Activated T-helper 1 cell treated with anti-CD3 and anti-CD28 coated beads, Interleukin-12 subunit alpha, Interleukin-12 subunit beta, Interleukin-2, Interleukin-4 antibody, amounts not matched to agents 30 ng/mL and 10 ng/mL and 1 ng/mL, durations not matched to agents 14 hours and 24 hours and 36 hours (primary cell): ENCODE measurements at regions of chr4 and their contacts with region 1.

Region 1: DNA sequence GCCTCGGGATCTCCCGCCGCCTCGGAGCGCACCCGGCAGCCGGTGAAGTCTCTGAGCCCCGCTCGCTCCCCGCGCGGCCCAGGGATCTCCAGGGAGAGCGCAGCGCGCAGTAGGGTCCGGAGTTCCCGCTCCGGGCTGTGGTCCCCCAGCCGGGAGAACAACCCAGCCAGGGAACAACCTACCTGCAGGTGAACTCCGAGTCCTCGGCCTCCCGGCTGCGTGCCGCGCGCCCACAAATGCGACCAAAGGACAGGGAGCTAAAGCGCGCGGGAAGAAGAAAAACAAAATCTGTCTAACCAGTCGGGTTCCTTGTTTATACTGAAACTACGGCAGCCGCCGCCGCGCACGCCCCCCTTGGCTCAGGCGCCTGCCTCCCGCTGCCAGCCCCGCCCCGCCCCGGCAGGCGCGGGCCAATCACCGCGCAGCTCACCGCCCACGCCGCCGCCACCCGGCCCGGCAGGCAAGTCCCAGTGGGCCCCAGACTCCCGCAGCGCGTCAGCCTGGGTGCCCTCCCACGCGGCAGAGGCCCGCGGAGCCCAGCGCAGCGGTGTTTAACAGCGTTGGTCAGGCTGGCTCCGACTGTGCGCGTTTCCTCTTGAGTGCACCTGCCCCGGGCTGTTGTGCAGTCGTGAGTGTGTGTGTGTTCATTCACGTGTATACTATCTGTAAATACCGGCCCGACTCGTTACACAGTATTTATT is at the start of gene RASGEF1B:
- DNase-seq: peak; percentile 91
- H3K4me3 Mint-ChIP-seq: peak within 1 kb of the TSS; percentile 93
- H3K27ac Mint-ChIP-seq: peak within 1 kb of the TSS; percentile 92
- H3K4me1 Mint-ChIP-seq: peaks cover 50% of the 10 kb centered on the region
- H3K27me3 Mint-ChIP-seq: peaks cover 22% of the 10 kb centered on the region
- total RNA-seq, gene RASGEF1B: 3.6 and 3.7 TPM in 2 replicates

Region 2: DNA sequence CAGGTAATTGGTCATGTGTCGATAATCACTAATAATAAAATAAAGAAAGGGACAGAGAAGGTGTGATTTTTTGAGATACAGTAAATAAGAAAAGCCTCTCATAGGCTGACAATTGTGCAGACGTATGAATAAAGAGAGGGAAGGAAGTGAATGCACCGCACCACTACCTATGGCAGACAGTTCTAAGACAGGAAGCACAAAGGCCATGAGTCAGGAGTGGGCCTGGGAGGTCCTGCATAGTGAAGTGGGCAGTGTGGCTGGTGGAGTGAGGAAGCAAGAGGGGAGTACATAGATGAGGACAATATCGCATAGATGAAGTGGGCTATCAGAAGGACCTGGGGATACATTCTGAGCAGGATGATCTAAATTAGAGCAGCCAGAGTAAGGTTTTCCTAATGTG is 365.6 kb before region 1 on chr4:
- intact Hi-C with region 1: no loop called
- DNase-seq: no peak
- H3K4me3 Mint-ChIP-seq: no peak overlapping the region
- H3K27ac Mint-ChIP-seq: no peak overlapping the region
- H3K4me1 Mint-ChIP-seq: no peaks in the 10 kb centered on the region
- H3K27me3 Mint-ChIP-seq: no peaks in the 10 kb centered on the region

Region 3: DNA sequence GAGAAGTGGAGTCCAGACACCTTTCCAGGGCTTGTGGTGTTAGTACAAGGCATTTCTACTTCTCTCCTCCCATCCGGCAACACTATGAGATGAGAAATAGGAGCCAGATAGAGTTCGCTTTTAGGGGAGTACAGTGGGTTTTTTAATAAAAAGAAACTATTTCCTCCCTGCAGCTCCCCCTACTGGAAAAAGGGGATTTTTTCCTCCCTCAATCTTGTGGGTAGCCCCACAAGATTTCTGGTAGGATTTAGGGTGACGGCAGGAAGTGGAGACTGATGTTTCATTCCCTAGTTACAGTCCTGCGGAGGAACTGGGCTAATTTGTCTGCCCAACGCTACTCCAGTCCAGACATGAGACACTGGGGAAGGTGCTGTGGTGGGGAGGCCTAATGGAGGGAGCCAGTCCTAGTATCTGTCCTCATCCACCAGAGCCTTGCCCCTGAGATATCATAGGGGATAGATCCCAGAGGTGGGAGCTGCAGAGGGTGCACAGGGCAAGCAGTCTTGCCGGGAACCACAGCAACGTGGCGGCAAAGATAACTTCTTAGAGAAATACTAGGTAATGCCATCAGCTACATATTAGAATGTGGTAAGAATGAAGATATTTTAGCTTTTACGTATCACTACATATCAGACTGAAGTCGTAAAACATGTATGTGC is 211.2 kb before region 1 on chr4:
- intact Hi-C with region 1: no loop called
- DNase-seq: no peak
- H3K4me3 Mint-ChIP-seq: no peak overlapping the region
- H3K27ac Mint-ChIP-seq: no peak overlapping the region
- H3K4me1 Mint-ChIP-seq: no peaks in the 10 kb centered on the region
- H3K27me3 Mint-ChIP-seq: no peaks in the 10 kb centered on the region

Region 4: DNA sequence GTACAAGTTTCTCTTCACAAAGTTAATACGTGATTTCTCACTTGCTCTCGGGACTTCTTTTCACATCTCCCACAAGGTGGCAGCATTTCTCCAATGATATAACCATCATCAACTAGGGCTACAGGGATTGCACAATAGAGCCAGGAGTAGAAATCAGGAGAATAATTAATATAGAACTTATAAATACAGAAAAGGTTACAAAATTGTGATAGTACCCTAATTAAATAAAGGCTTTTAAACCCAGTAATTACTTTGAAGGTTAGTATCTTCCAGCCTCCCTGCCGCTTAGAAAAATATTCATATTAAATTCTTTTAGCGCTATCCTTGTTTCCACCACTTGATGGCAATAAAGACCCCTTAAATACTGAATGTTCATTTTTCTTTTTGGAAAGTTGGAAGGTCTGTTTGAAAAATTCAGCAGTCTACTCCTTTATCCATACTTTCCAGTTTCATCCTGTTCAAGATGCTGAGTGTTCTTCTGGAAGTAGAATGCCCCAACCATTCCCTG is 65.8 kb before region 1 on chr4:
- intact Hi-C with region 1: loop called (anchors 1 kb)
- DNase-seq: peak; percentile 25
- H3K4me3 Mint-ChIP-seq: no peak overlapping the region
- H3K27ac Mint-ChIP-seq: no peak overlapping the region
- H3K4me1 Mint-ChIP-seq: peaks cover 8% of the 10 kb centered on the region
- H3K27me3 Mint-ChIP-seq: peaks cover 8% of the 10 kb centered on the region

Region 5: DNA sequence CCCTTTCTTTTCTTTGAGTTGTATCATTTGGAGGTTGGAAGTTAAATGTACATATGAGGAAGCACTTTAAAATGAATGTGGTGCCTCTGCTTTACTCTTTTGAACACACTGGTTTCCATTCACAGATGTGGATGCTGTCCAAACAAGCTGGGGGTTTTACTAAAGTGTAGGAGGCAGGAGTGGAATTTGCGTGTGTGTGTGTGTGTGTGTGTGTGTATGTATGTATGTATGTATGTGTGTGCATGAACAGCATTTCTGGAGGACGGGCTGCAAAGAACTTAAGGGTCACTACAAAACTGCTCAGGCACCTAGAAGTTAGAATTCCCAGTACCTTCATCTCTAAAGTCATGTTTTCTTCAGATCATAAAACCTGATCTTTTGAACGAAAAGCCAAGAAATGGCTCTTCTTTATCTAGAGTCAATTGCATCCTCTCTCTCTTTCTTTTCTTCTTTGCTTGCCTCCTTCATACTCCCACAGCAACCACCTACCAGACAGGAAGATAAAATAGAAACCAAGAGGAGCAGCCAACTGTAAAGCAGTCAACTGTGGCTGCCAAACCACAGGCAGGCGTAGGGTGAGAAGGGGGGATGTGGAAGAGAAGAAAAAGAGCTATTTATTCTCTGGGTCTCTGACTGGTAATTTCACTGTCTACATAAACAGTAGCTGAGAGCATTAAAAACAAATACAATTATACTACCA is 177.0 kb after region 1 on chr4:
- intact Hi-C with region 1: loop called (anchors 1 kb)
- DNase-seq: peak; percentile 37
- H3K4me3 Mint-ChIP-seq: peak overlapping the region; percentile 46
- H3K27ac Mint-ChIP-seq: peak overlapping the region; percentile 81
- H3K4me1 Mint-ChIP-seq: peaks cover 57% of the 10 kb centered on the region
- H3K27me3 Mint-ChIP-seq: no peaks in the 10 kb centered on the region

Region 6: GRCh38 chr4:81724925-81725329 is 253.2 kb after region 1 on chr4:
- intact Hi-C with region 1: loop called (anchors 1 kb)
- DNase-seq: peak; percentile 37
- H3K4me3 Mint-ChIP-seq: no peak overlapping the region
- H3K27ac Mint-ChIP-seq: no peak overlapping the region
- H3K4me1 Mint-ChIP-seq: peaks cover 17% of the 10 kb centered on the region
- H3K27me3 Mint-ChIP-seq: peaks cover 19% of the 10 kb centered on the region

Region 7: DNA sequence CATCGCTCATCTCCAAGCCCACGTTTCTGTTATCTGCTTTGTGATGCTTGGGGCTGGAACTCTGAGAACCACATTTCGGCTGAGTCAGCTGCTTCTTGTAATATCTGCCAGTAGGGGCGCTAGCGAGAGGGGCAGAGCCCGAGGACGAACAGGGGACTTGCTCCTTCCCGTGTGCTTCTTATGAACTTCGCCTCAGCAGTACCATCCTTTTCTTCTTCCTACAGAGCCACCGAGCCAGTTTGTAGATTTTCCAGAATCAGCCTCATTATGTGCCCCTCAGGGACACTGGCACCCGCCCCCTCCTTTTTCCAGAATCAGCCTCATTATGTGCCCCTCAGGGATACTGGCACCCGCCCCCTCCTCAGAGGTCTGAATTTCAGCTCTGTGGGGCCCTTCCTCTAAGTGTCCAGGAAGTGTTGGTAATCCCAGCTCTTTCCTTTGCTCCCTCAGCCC is 441.7 kb after region 1 on chr4:
- intact Hi-C with region 1: loop called (anchors 2 kb)
- DNase-seq: peak; percentile 28
- H3K4me3 Mint-ChIP-seq: no peak overlapping the region
- H3K27ac Mint-ChIP-seq: no peak overlapping the region
- H3K4me1 Mint-ChIP-seq: peaks cover 9% of the 10 kb centered on the region
- H3K27me3 Mint-ChIP-seq: peaks cover 8% of the 10 kb centered on the region

Region 8: DNA sequence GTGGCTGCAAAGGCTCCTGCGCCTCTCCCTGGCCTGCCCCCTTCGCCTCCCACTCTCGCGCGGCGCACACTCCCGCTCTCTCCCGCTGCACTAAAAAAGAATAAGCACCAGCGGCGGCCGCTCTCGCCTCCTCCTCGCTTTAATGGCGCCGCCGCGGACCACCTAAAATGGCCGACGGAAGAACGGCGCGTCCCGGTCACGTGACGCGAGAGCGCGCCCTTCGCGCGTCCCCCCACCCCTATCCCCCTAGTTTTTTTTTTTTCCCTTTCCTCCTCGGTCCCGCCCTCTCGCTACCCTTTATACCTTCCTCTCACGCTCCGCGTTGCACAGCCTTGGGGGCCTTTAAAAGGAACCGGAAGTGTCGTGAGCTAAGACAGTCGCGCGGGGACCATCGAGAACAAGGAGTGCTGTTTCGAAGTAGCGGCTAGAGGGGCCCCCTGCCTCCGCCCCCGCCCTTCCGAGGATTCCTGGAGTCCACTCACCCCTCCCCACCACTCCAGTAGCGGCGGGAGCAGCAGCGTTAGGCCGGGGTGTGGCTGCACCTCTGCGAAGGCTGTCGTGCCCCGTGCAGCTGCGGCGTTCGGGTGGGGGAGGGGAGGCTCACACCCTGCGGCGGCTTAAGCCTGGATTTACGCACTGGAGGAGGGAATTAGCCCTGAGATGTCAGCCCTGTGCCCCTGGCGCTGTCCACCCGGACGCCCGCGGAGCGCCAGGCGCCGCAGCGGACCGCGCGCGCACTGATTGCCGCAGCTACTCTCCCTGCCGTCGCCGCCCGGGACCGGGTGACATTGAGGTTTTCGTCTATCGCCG is 902.3 kb after region 1 on chr4 and contains the start of gene HNRNPD:
- intact Hi-C with region 1: loop called (anchors 5 kb)
- DNase-seq: peak; percentile 92
- H3K4me3 Mint-ChIP-seq: peak within 1 kb of the TSS; percentile 99
- H3K27ac Mint-ChIP-seq: peak within 1 kb of the TSS; percentile 100
- H3K4me1 Mint-ChIP-seq: peaks cover 37% of the 10 kb centered on the region
- H3K27me3 Mint-ChIP-seq: peaks cover 2% of the 10 kb centered on the region
- total RNA-seq, gene HNRNPD: 434 and 438 TPM in 2 replicates